CD4-positive, alpha-beta T cell (primary cell): ENCODE measurements at regions of chr5 and their contacts with region 1.

Region 1: DNA sequence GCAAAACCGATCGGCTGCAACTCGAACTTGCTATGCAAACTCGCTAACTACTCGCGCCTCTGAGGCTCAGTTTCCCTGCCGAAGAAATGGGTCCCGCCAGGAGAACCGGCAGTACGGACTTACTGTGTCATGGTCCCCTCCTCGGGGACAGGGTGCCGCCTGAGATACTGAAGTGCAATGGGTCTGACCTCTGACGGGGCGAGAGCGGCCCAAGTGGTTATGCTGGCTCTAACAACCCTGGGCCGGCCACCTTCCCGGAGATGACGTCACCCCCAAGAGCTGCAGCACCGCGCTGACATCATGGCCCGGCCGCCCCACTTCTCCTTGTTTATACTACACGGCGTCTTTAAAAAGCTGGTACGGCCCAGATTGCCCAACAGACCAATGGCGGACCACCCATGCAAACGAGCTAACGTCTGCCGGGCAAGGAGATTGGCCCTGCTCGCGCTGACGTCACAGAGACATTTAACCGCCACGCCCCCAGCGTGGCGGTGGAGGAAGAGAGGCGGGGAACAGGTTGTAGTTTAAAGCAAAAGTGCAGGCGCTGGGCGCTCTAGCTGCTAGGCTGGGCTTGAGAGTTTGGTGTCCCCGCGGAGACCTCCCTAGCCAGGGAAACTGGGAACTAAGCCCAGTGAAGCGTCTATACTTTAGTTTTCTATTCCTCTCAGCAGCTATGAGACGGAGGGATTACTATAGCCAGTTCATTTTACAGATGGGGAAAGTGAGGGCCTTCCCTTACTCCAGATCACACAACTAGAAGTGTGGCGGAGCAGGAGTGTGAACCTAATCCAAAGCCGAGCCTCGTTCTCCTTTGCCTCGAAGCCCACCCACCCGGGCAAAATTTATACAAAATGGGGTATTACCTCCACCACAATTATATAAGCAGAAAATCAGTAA is 654 bp upstream of the RNF44 start:
- DNase-seq: peak; percentile 92 to 100 (median 96)
- ATAC-seq: peak; percentile 73
- H3K4me3 ChIP-seq: peak overlapping the region; percentile 98
- H3K4me3 Mint-ChIP-seq: peak overlapping the region; percentile 99
- H3K27ac ChIP-seq: peak overlapping the region; percentile 99
- H3K27ac Mint-ChIP-seq: peak overlapping the region; percentile 100
- H3K4me1 ChIP-seq: peaks cover 78% of the 10 kb centered on the region
- H3K4me1 Mint-ChIP-seq: peaks cover 82% of the 10 kb centered on the region
- H3K27me3 ChIP-seq: no peaks in the 10 kb centered on the region
- H3K27me3 Mint-ChIP-seq: no peaks in the 10 kb centered on the region
- CTCF ChIP-seq: no peak

Region 2: GRCh38 chr5:176388444-176389134 is 149.3 kb before region 1 on chr5 and contains the starts of genes HIGD2A and NOP16:
- CTCF ChIA-PET with region 1: no interaction called
- POLR2A ChIA-PET with region 1: interaction called, 29 read pairs
- intact Hi-C with region 1: loop called in 1 of 2 experiments (anchors 10 kb)
- DNase-seq: peak; percentile 96 to 100 (median 99)
- ATAC-seq: peak; percentile 87
- H3K4me3 ChIP-seq: peak within 1 kb of the TSS; percentile 79
- H3K4me3 Mint-ChIP-seq: peak within 1 kb of the TSS; percentile 98
- H3K27ac ChIP-seq: peak within 1 kb of the TSS; percentile 87 to 95
- H3K27ac Mint-ChIP-seq: peak within 1 kb of the TSS; percentile 97
- H3K4me1 ChIP-seq: peaks cover 33% of the 10 kb centered on the region
- H3K4me1 Mint-ChIP-seq: peaks cover 38% of the 10 kb centered on the region
- H3K27me3 ChIP-seq: no peaks in the 10 kb centered on the region
- H3K27me3 Mint-ChIP-seq: no peaks in the 10 kb centered on the region
- CTCF ChIP-seq: no peak
- total RNA-seq, gene HIGD2A: 98.2 to 104 TPM
- total RNA-seq, gene NOP16: 12.0 to 14.5 TPM

Region 3: GRCh38 chr5:176447982-176448608 is 89.8 kb before region 1 on chr5 and contains the start of gene FAF2:
- CTCF ChIA-PET with region 1: interaction called, 42 read pairs
- POLR2A ChIA-PET with region 1: interaction called, 126 read pairs
- intact Hi-C with region 1: loop called (anchors 1 kb)
- DNase-seq: peak; percentile 94 to 100 (median 98)
- ATAC-seq: peak; percentile 96
- H3K4me3 ChIP-seq: peak within 1 kb of the TSS; percentile 96
- H3K4me3 Mint-ChIP-seq: peak within 1 kb of the TSS; percentile 99
- H3K27ac ChIP-seq: peak within 1 kb of the TSS; percentile 81 to 96
- H3K27ac Mint-ChIP-seq: peak within 1 kb of the TSS; percentile 99
- H3K4me1 ChIP-seq: peaks cover 30% of the 10 kb centered on the region
- H3K4me1 Mint-ChIP-seq: peaks cover 49% of the 10 kb centered on the region
- H3K27me3 ChIP-seq: no peaks in the 10 kb centered on the region
- H3K27me3 Mint-ChIP-seq: no peaks in the 10 kb centered on the region
- CTCF ChIP-seq: peak; percentile 88
- total RNA-seq, gene FAF2: 27.5 to 30.1 TPM

Region 4: GRCh38 chr5:176524135-176524534 is 13.7 kb before region 1 on chr5:
- CTCF ChIA-PET with region 1: interaction called, 27 read pairs
- POLR2A ChIA-PET with region 1: interaction called, 185 read pairs
- intact Hi-C with region 1: no loop called
- DNase-seq: no peak
- ATAC-seq: no peak
- H3K4me3 ChIP-seq: no peak overlapping the region
- H3K4me3 Mint-ChIP-seq: no peak overlapping the region
- H3K27ac ChIP-seq: no peak overlapping the region
- H3K27ac Mint-ChIP-seq: no peak overlapping the region
- H3K4me1 ChIP-seq: peaks cover 11% of the 10 kb centered on the region
- H3K4me1 Mint-ChIP-seq: peaks cover 41% of the 10 kb centered on the region
- H3K27me3 ChIP-seq: no peaks in the 10 kb centered on the region
- H3K27me3 Mint-ChIP-seq: no peaks in the 10 kb centered on the region
- CTCF ChIP-seq: no peak

Region 5: GRCh38 chr5:176573564-176574296 is 35.9 kb after region 1 on chr5:
- CTCF ChIA-PET with region 1: interaction called, 3 read pairs
- POLR2A ChIA-PET with region 1: interaction called, 4 read pairs
- intact Hi-C with region 1: loop called in 1 of 2 experiments (anchors 5 kb)
- DNase-seq: peak; percentile 60 to 89 (median 76)
- ATAC-seq: peak; percentile 79
- H3K4me3 ChIP-seq: no peak overlapping the region
- H3K4me3 Mint-ChIP-seq: no peak overlapping the region
- H3K27ac ChIP-seq: no peak overlapping the region
- H3K27ac Mint-ChIP-seq: no peak overlapping the region
- H3K4me1 ChIP-seq: peaks cover 13% of the 10 kb centered on the region
- H3K4me1 Mint-ChIP-seq: no peaks in the 10 kb centered on the region
- H3K27me3 ChIP-seq: no peaks in the 10 kb centered on the region
- H3K27me3 Mint-ChIP-seq: peaks cover 4% of the 10 kb centered on the region
- CTCF ChIP-seq: peak; percentile 79

Region 6: DNA sequence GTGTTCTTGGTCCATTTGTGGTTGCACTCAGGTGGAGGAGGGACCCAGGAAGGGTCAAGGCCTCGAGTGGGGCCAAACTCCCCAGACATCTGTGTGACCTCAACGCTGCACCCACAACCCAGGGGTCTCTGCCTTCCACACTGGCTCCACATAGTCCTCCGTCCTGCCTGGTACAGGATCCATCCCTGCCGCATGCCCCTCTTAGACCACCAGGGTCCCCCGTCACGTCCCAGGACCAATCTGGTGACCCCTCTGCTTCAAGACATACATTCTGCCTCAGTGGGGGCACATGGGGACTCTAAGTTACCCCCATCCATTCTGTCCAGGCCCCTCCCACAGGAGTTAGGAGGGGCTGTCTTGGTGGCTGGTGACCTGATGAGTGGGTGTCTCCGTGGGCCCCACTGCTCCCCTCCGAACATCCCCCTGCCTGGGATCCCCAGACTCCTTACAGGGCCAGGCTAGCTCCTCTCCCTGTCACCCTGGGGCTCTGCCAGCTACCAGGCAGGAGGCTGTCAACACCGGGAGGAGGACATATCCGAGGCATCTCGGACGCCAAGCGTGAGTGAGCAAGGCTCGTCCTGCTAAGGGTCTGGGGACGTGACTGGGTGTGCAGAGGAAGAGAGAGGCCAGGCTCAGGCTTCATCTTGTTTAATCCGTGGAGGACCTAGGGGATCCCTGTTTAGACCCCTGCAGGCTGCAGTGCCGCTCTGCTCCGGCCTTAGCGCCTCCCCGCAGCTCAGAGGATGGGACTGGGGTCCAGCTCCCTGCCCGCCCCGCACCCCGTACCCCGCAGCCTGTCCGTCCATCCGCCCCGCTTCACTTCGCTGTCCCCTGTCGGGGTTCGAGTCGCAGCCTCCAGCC is 141.7 kb after region 1 on chr5:
- CTCF ChIA-PET with region 1: no interaction called
- POLR2A ChIA-PET with region 1: no interaction called
- intact Hi-C with region 1: no loop called
- DNase-seq: no peak
- ATAC-seq: no peak
- H3K4me3 ChIP-seq: no peak overlapping the region
- H3K4me3 Mint-ChIP-seq: no peak overlapping the region
- H3K27ac ChIP-seq: no peak overlapping the region
- H3K27ac Mint-ChIP-seq: no peak overlapping the region
- H3K4me1 ChIP-seq: peaks cover 5% of the 10 kb centered on the region
- H3K4me1 Mint-ChIP-seq: no peaks in the 10 kb centered on the region
- H3K27me3 ChIP-seq: peaks cover 30 to 62% of the 10 kb centered on the region in 2 experiments
- H3K27me3 Mint-ChIP-seq: peaks cover 75% of the 10 kb centered on the region
- CTCF ChIP-seq: no peak

Region 7: GRCh38 chr5:176822041-176822792 is 284.4 kb after region 1 on chr5:
- CTCF ChIA-PET with region 1: no interaction called
- POLR2A ChIA-PET with region 1: no interaction called
- intact Hi-C with region 1: no loop called
- DNase-seq: no peak
- ATAC-seq: no peak
- H3K4me3 ChIP-seq: no peak overlapping the region
- H3K4me3 Mint-ChIP-seq: no peak overlapping the region
- H3K27ac ChIP-seq: no peak overlapping the region
- H3K27ac Mint-ChIP-seq: no peak overlapping the region
- H3K4me1 ChIP-seq: peaks cover 9% of the 10 kb centered on the region
- H3K4me1 Mint-ChIP-seq: peaks cover 9% of the 10 kb centered on the region
- H3K27me3 ChIP-seq: peaks cover 18 to 31% of the 10 kb centered on the region in 2 experiments
- H3K27me3 Mint-ChIP-seq: peaks cover 62% of the 10 kb centered on the region
- CTCF ChIP-seq: no peak

Region 8: DNA sequence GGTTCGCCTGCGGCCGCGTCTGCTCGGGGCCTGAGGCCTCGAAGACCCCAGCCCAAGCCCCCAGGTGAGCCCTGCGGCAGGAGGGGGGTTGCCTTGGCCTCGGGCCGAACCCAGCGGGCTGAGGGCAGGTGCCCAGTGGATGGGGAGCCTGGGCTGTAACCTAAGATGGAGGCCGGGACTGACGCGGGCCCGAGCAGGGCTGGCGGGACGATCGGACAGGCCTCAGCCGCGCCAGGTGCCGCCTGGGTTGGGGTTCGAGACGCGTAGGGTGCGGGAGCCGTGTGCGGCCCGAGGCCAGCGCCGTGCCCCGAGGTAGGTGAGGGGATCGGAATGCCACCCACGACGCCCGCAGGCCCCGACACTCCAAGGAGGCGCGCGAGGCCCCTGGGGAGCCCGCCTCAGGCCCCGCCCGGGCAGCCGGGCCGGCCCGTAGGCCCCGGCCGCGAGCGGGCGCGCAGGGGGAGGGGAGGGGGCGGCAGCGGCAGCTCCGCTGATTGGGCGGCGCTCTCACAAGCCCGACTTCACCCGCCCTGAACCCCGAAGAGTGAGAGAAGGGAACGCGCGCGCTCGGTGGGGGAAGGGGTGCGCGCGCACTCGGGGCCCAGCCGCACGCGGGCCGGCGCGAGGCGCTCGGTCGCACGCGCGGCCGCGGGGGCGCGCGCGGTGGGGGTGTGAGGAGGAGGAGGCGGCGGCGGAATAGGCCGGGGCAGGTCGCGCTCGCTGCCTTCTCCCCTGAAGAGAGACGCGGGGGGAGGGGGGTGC is 595.4 kb after region 1 on chr5 and contains the start of gene NSD1:
- CTCF ChIA-PET with region 1: no interaction called
- POLR2A ChIA-PET with region 1: interaction called, 4 read pairs
- intact Hi-C with region 1: loop called in 1 of 2 experiments (anchors 10 kb)
- DNase-seq: peak; percentile 83 to 97 (median 90)
- ATAC-seq: peak; percentile 71
- H3K4me3 ChIP-seq: peak within 1 kb of the TSS; percentile 65
- H3K4me3 Mint-ChIP-seq: peak within 1 kb of the TSS; percentile 90
- H3K27ac ChIP-seq: peak within 1 kb of the TSS; percentile 71 to 76
- H3K27ac Mint-ChIP-seq: peak within 1 kb of the TSS; percentile 97
- H3K4me1 ChIP-seq: peaks cover 54% of the 10 kb centered on the region
- H3K4me1 Mint-ChIP-seq: peaks cover 67% of the 10 kb centered on the region
- H3K27me3 ChIP-seq: no peaks in the 10 kb centered on the region
- H3K27me3 Mint-ChIP-seq: no peaks in the 10 kb centered on the region
- CTCF ChIP-seq: no peak
- total RNA-seq, gene NSD1: 87.6 to 93.3 TPM